ENCODE measurements at regions of chr2 and their contacts with region 1.

Region 1: GRCh38 chr2:218849721-218850120 is 9.9 kb upstream of the WNT6 start:
- DNase-seq: no peak
- H3K4me3 ChIP-seq: no peak overlapping the region
- H3K27ac ChIP-seq: no peak overlapping the region
- H3K4me1 ChIP-seq: no peaks in the 10 kb centered on the region
- H3K27me3 ChIP-seq: no peaks in the 10 kb centered on the region
- CTCF ChIP-seq: no peak
- POLR2A ChIP-seq: no peak

Region 2: GRCh38 chr2:218710687-218711549 is 138.8 kb before region 1 on chr2 and contains the start of gene TTLL4:
- intact Hi-C with region 1: loop called (anchors 5 kb)
- DNase-seq: peak; percentile 99
- H3K4me3 ChIP-seq: peak within 1 kb of the TSS; percentile 63 to 66 (median 63)
- H3K27ac ChIP-seq: peak within 1 kb of the TSS in 2 of 3 donors; percentile 71
- H3K4me1 ChIP-seq: peaks cover 5 to 11% of the 10 kb centered on the region in 2 donors
- H3K27me3 ChIP-seq: no peaks in the 10 kb centered on the region
- CTCF ChIP-seq: peak; percentile 71 to 96 (median 90)
- POLR2A ChIP-seq: peak in 1 of 2 donors; percentile 65
- total RNA-seq, gene TTLL4: 5.7 to 19.2 (median 12.5) TPM

Region 3: GRCh38 chr2:218733171-218734021 is 116.3 kb before region 1 on chr2:
- intact Hi-C with region 1: loop called (anchors 5 kb)
- DNase-seq: no peak
- H3K4me3 ChIP-seq: no peak overlapping the region
- H3K27ac ChIP-seq: no peak overlapping the region
- H3K4me1 ChIP-seq: peaks cover 0 to 4% of the 10 kb centered on the region in 2 donors
- H3K27me3 ChIP-seq: no peaks in the 10 kb centered on the region
- CTCF ChIP-seq: no peak
- POLR2A ChIP-seq: no peak